ENCODE measurements at regions of chr2 and their contacts with region 1.

Region 1: DNA sequence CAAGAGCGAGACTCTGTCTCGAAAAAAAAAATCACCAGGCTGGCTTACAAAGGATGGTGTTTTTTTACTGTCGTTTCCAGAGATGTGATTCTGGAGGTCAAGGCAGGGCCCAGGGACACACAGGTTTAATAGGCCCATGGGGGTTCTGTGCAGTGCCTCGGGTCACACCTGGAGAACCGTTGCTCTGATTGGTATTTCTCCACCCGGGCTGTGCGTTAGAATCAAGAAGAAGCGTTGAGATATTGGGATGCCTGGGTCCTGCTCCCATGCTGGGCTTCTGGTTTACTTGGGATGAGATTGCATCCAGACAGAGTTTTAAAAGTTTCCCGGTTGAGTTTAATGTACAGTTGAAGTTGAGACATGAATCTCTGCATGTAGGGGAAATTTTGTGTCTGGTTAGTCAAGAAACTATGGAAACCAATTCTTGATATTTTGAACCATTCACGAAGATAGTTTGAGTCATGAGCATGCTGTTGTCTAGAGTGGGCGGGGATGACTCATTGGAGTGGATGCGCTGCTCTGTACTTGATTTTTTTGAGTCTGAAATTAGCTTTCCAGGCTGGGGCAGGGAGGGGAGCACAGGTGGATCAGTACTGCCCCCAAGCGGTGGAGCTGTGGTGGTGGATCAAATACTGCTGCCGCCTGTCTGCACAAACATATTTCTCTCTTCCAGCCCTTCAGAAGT is 50.1 kb downstream of the GREB1 start:
- DNase-seq: peak; percentile 86 to 88
- ATAC-seq: peak; percentile 54 to 84
- H3K4me3 ChIP-seq: no peak overlapping the region
- H3K27ac ChIP-seq: peak overlapping the region; percentile 21 to 34; a peak in 4 of 6 replicates
- H3K4me1 ChIP-seq: peaks cover 21% of the 10 kb centered on the region
- CTCF ChIP-seq: peak; percentile 96
- EP300 ChIP-seq: no peak
- POLR2A ChIP-seq: no peak
- RAD21 ChIP-seq: peak; percentile 96 to 98

Region 2: DNA sequence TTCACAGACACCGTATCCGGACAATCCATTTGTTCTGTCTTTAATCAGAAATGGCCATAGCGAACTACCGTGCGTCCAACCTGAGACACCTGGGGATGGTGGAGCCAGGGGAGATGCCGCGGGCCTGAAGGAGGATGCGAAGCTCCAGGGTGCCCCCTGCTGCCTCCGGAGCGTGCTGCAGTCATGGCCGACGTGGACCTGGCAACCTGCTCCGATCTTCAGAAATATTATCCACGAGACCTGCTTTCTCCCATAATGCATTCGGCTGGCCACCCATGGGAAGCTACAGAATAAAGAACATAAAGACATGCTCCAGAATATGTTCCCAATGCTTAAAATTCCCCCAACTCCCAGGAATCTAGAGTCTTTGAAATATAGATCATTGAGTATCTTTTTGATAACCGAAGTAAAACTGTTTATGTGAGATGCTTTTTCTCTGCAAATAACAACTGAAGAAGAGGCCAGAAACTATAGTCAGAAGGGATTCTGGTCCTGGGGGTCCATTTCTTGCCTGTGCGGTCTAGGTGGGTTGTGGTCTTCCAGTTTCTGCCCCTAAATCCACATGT is 459.4 kb before region 1 on chr2:
- CTCF ChIA-PET with region 1: interaction called, 333 read pairs
- POLR2A ChIA-PET with region 1: no interaction called
- DNase-seq: peak; percentile 77 to 85
- ATAC-seq: peak; percentile 83 to 93
- H3K4me3 ChIP-seq: no peak overlapping the region
- H3K27ac ChIP-seq: no peak overlapping the region; a peak in 1 of 6 replicates
- H3K4me1 ChIP-seq: 0 out of 3 replicates have a peak, but pooled peaks cover 2% of the 10 kb centered on the region
- CTCF ChIP-seq: peak; percentile 96
- EP300 ChIP-seq: no peak
- POLR2A ChIP-seq: no peak
- RAD21 ChIP-seq: peak; percentile 99

Region 3: GRCh38 chr2:11446733-11447248 is 137.2 kb before region 1 on chr2:
- CTCF ChIA-PET with region 1: interaction called, 10 read pairs
- POLR2A ChIA-PET with region 1: no interaction called
- DNase-seq: peak; percentile 58 to 73
- ATAC-seq: peak; percentile 87 to 88
- H3K4me3 ChIP-seq: no peak overlapping the region
- H3K27ac ChIP-seq: no peak overlapping the region
- H3K4me1 ChIP-seq: no peaks in the 10 kb centered on the region
- CTCF ChIP-seq: peak; percentile 95
- EP300 ChIP-seq: no peak
- POLR2A ChIP-seq: no peak
- RAD21 ChIP-seq: peak; percentile 89 to 91

Region 4: GRCh38 chr2:11515490-11515981 is 68.4 kb before region 1 on chr2:
- CTCF ChIA-PET with region 1: interaction called, 13 read pairs
- POLR2A ChIA-PET with region 1: no interaction called
- DNase-seq: no peak
- ATAC-seq: no peak
- H3K4me3 ChIP-seq: no peak overlapping the region
- H3K27ac ChIP-seq: no peak overlapping the region
- H3K4me1 ChIP-seq: no peaks in the 10 kb centered on the region
- CTCF ChIP-seq: no peak
- EP300 ChIP-seq: no peak
- POLR2A ChIP-seq: no peak
- RAD21 ChIP-seq: no peak

Region 5: DNA sequence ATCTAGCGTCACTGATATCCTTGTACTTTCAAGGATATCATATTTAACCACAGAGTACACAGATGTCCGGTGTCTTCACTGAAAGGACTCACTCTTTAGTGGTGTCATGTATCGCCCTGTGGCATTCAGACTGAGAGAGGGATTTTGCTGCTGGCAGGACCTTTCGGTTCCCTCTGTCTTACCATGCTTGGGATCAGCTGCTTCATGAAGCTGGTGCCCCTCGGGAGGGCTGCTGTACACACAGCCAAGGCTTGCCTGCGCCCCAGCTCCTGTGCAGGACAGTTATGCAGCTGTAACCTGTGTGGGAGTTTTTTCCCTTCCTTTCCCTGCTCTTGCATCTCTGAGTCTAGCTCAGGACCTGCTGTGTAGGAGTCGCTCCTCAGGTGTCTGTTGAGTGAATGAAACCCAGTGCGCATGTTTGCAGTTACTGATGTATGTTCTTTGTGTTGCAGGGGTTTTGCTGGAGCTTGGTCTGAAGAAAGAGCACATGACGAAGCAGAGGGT is 14.3 kb after region 1 on chr2:
- CTCF ChIA-PET with region 1: interaction called, 153 read pairs
- POLR2A ChIA-PET with region 1: no interaction called
- DNase-seq: no peak
- ATAC-seq: peak; percentile 58 to 62; a peak in 5 of 6 replicates
- H3K4me3 ChIP-seq: no peak overlapping the region
- H3K27ac ChIP-seq: no peak overlapping the region
- H3K4me1 ChIP-seq: no peaks in the 10 kb centered on the region
- CTCF ChIP-seq: no peak
- EP300 ChIP-seq: no peak
- POLR2A ChIP-seq: no peak
- RAD21 ChIP-seq: no peak

Region 6: GRCh38 chr2:11681722-11682589 is 98.0 kb after region 1 on chr2:
- CTCF ChIA-PET with region 1: interaction called, 27 read pairs
- POLR2A ChIA-PET with region 1: no interaction called
- DNase-seq: peak; percentile 43 to 94
- ATAC-seq: peak; percentile 41 to 85; a peak in 3 of 6 replicates
- H3K4me3 ChIP-seq: no peak overlapping the region
- H3K27ac ChIP-seq: no peak overlapping the region
- H3K4me1 ChIP-seq: peaks cover 4% of the 10 kb centered on the region; the same call in 1 of the 3 replicates
- CTCF ChIP-seq: peak; percentile 80
- EP300 ChIP-seq: no peak
- POLR2A ChIP-seq: no peak
- RAD21 ChIP-seq: peak; percentile 70 to 81